ENCODE measurements at regions of chrX and their contacts with region 1.

Region 1: GRCh38 chrX:12701628-12702027 is 89.6 kb upstream of the PRPS2 start:
- DNase-seq: peak; percentile 54
- ATAC-seq: peak; percentile 70 to 75
- H3K4me3 ChIP-seq: no peak overlapping the region
- H3K27ac ChIP-seq: no peak overlapping the region
- H3K4me1 ChIP-seq: no peaks in the 10 kb centered on the region
- H3K27me3 ChIP-seq: no peaks in the 10 kb centered on the region
- CTCF ChIP-seq: peak; percentile 42

Region 2: GRCh38 chrX:12080265-12080664 is 621.4 kb before region 1 on chrX:
- intact Hi-C with region 1: loop called (anchors 10 kb)
- DNase-seq: no peak
- ATAC-seq: no peak
- H3K4me3 ChIP-seq: no peak overlapping the region
- H3K27ac ChIP-seq: no peak overlapping the region
- H3K4me1 ChIP-seq: no peaks in the 10 kb centered on the region
- H3K27me3 ChIP-seq: no peaks in the 10 kb centered on the region
- CTCF ChIP-seq: peak; percentile 41